ENCODE measurements at regions of chr2 and their contacts with region 1.

Region 1: GRCh38 chr2:27191053-27191829 is 20.6 kb upstream of the ATRAID start:
- DNase-seq: peak; percentile 84
- H3K4me3 ChIP-seq: no peak overlapping the region
- H3K27ac ChIP-seq: no peak overlapping the region
- H3K4me1 ChIP-seq: no peaks in the 10 kb centered on the region
- H3K27me3 ChIP-seq: no peaks in the 10 kb centered on the region
- CTCF ChIP-seq: peak; percentile 95
- EP300 ChIP-seq: 0 out of 4 replicates have a peak, but pooled peaks of 1 of the 2 experiments have one; percentile 20
- RAD21 ChIP-seq: peak; percentile 98

Region 2: GRCh38 chr2:27095745-27096651 is 95.2 kb before region 1 on chr2:
- CTCF ChIA-PET with region 1: interaction called, 131 read pairs
- POLR2A ChIA-PET with region 1: interaction called, 6 read pairs
- DNase-seq: peak; percentile 91
- H3K4me3 ChIP-seq: peak overlapping the region in 1 of 2 experiments; percentile 43; a peak in 2 of 4 replicates
- H3K27ac ChIP-seq: peak overlapping the region in 1 of 2 experiments; percentile 92; a peak in 2 of 4 replicates
- H3K4me1 ChIP-seq: peaks cover 4 to 21% of the 10 kb centered on the region in 2 experiments; a peak in 2 of 4 replicates
- H3K27me3 ChIP-seq: no peaks in the 10 kb centered on the region
- CTCF ChIP-seq: no peak
- EP300 ChIP-seq: no peak
- RAD21 ChIP-seq: peak; percentile 35

Region 3: GRCh38 chr2:27133905-27134780 is 57.1 kb before region 1 on chr2 and contains the start of gene PREB:
- CTCF ChIA-PET with region 1: interaction called, 29 read pairs
- POLR2A ChIA-PET with region 1: interaction called, 3 read pairs
- DNase-seq: peak; percentile 100
- H3K4me3 ChIP-seq: peak within 1 kb of the TSS; percentile 94 to 97
- H3K27ac ChIP-seq: peak within 1 kb of the TSS; percentile 55 to 71; a peak in 3 of 4 replicates
- H3K4me1 ChIP-seq: peaks cover 7 to 14% of the 10 kb centered on the region in 2 experiments; a peak in 3 of 4 replicates
- H3K27me3 ChIP-seq: 0 out of 2 replicates have a peak, but pooled peaks cover 1% of the 10 kb centered on the region
- CTCF ChIP-seq: peak; percentile 56
- EP300 ChIP-seq: no peak
- RAD21 ChIP-seq: peak; percentile 51
- polyA plus RNA-seq, gene PREB: 47.9 and 51.3 TPM in 2 replicates

Region 4: GRCh38 chr2:27162151-27163121 is 28.8 kb before region 1 on chr2:
- CTCF ChIA-PET with region 1: interaction called, 17 read pairs
- POLR2A ChIA-PET with region 1: no interaction called
- DNase-seq: no peak
- H3K4me3 ChIP-seq: no peak overlapping the region
- H3K27ac ChIP-seq: no peak overlapping the region
- H3K4me1 ChIP-seq: no peaks in the 10 kb centered on the region
- H3K27me3 ChIP-seq: no peaks in the 10 kb centered on the region
- CTCF ChIP-seq: no peak
- EP300 ChIP-seq: no peak
- RAD21 ChIP-seq: no peak

Region 5: DNA sequence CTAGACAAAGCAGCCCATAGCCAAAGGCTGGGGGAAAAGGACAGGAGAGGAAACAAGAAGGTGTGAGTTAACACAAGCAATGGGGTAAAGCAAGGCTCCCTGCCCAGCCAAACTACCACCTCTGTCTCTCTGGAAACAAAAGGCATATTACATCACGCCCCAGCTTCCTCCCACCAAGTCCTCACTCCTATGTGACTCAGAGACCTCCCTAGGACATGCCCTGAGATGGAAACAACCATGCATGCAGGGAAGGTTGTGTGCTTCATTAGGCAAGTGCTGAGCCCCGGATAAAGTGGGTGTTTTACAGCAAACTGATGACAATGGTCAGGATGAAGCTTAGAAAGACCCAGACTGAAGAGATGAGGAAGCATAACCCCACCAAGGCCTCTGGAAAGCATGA is 11.6 kb after region 1 on chr2:
- CTCF ChIA-PET with region 1: interaction called, 25 read pairs
- POLR2A ChIA-PET with region 1: no interaction called
- DNase-seq: no peak
- H3K4me3 ChIP-seq: no peak overlapping the region
- H3K27ac ChIP-seq: no peak overlapping the region
- H3K4me1 ChIP-seq: no peaks in the 10 kb centered on the region; a peak in 1 of 4 replicates
- H3K27me3 ChIP-seq: no peaks in the 10 kb centered on the region
- CTCF ChIP-seq: no peak
- EP300 ChIP-seq: no peak
- RAD21 ChIP-seq: no peak

Region 6: GRCh38 chr2:27223416-27223815 is 32.2 kb after region 1 on chr2:
- CTCF ChIA-PET with region 1: no interaction called
- POLR2A ChIA-PET with region 1: no interaction called
- DNase-seq: no peak
- H3K4me3 ChIP-seq: no peak overlapping the region
- H3K27ac ChIP-seq: no peak overlapping the region
- H3K4me1 ChIP-seq: no peaks in the 10 kb centered on the region; a peak in 1 of 4 replicates
- H3K27me3 ChIP-seq: no peaks in the 10 kb centered on the region
- CTCF ChIP-seq: no peak
- EP300 ChIP-seq: no peak
- RAD21 ChIP-seq: no peak

Region 7: DNA sequence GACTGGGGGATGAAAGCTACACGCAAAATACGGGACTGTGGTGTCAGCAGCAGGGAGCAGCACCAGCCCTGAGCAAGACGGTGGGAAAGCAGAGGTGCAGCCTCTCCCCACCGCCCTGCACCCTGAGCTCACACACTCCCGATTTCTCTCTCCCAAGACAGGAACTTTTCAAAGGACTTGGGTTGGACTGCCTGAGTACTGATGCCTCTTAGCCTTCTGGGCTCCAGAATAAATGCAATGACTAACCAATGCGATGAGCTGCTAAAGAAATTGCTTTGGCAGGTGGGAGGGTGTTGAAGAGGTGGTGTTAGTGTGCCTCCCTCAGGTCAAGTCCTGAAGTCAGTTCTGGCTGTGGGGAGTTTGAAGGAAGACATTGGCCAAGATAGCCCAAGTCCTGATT is 100.6 kb after region 1 on chr2:
- CTCF ChIA-PET with region 1: interaction called, 13 read pairs
- POLR2A ChIA-PET with region 1: no interaction called
- DNase-seq: no peak
- H3K4me3 ChIP-seq: no peak overlapping the region
- H3K27ac ChIP-seq: no peak overlapping the region
- H3K4me1 ChIP-seq: peaks cover 2 to 13% of the 10 kb centered on the region in 2 experiments; a peak in 3 of 4 replicates
- H3K27me3 ChIP-seq: no peaks in the 10 kb centered on the region
- CTCF ChIP-seq: peak; percentile 38
- EP300 ChIP-seq: no peak
- RAD21 ChIP-seq: peak; percentile 26

Region 8: GRCh38 chr2:28583899-28584553 is 1392.8 kb after region 1 on chr2:
- CTCF ChIA-PET with region 1: no interaction called
- POLR2A ChIA-PET with region 1: no interaction called
- DNase-seq: no peak
- H3K4me3 ChIP-seq: peak overlapping the region in 1 of 2 experiments; percentile 21; a peak in 2 of 4 replicates
- H3K27ac ChIP-seq: peak overlapping the region in 1 of 2 experiments; percentile 97; a peak in 2 of 4 replicates
- H3K4me1 ChIP-seq: peaks cover 0 to 19% of the 10 kb centered on the region in 2 experiments; a peak in 3 of 4 replicates
- H3K27me3 ChIP-seq: no peaks in the 10 kb centered on the region
- CTCF ChIP-seq: no peak
- EP300 ChIP-seq: peak in 1 of 2 experiments; percentile 91; a peak in 2 of 4 replicates
- RAD21 ChIP-seq: no peak